CD4-positive, alpha-beta T cell (primary cell): ENCODE measurements at regions of chr19 and their contacts with region 1.

Region 1: DNA sequence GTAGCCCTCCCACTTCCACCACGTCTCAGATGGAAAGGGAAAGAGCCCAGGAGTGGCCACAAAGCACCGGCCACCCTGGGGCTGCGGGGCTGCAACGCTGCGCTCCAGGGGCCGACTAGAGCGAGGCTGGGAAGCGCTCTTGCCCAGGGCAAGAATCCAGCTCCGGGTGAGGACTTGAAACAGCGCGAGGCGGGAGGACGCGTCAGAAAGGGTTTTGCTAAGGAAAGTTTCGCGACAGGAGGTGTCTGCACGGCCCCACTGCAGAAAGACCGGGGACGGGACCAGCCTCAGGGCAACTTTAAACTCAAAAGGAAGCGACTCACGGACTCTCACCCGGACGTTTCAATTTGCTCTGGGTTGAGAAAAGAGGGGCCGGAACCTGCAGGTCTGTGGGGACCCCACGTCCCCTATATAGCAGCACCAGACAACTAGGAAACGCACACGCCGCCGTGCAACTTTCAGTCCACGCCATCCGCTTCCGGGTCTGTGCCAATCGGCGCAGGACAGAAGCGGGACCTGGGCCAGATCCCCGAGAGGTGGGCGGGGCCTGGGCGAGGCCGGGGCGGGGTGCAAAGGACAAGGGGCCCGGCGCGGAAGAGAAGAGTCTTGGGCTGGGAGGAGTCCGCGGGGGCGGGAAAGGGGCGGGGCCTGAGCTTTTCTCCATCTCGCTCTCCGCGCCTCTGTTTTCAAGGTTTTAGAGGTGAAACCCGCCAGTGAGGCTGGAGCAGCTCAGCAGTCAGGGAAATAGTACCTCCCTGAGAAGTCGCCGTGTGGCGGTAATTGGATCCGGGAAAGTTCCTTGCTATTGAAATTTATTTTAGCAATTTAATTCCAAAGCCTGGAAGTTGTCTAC is at the start of gene ZNF816:
- DNase-seq: peak; percentile 97 to 100 (median 99)
- ATAC-seq: peak; percentile 99
- H3K4me3 ChIP-seq: peak within 1 kb of the TSS; percentile 78
- H3K4me3 Mint-ChIP-seq: peak within 1 kb of the TSS; percentile 97
- H3K27ac ChIP-seq: peak within 1 kb of the TSS; percentile 63 to 68
- H3K27ac Mint-ChIP-seq: peak within 1 kb of the TSS; percentile 97
- H3K4me1 ChIP-seq: peaks cover 20% of the 10 kb centered on the region
- H3K4me1 Mint-ChIP-seq: peaks cover 36% of the 10 kb centered on the region
- H3K27me3 ChIP-seq: no peaks in the 10 kb centered on the region
- H3K27me3 Mint-ChIP-seq: no peaks in the 10 kb centered on the region
- CTCF ChIP-seq: no peak
- total RNA-seq, gene ZNF816: 3.6 to 5.5 TPM

Region 2: DNA sequence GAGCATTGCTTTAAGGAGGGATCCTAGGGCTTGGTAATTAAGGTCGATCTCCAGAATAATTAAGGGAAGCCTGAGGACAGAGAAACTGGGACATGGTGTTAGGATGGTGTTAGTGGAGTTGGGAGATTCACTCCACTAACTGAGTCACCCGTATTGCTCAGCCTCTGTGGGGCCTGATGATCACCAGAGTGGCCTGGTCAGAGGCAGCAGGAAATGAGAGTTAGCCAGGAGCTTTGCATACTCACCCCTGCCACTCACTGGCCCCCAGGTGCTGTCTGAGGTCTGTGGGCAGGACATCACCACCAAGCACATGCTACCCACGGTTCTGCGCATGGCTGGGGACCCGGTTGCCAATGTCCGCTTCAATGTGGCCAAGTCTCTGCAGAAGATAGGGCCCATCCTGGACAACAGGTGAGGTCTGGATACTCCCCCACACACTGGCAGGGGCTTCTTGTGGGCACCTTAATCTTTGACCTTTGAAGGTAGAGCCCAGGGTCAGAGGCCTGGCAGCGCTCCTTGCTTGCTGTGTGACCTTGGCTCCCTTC is 740.7 kb before region 1 on chr19:
- CTCF ChIA-PET with region 1: no interaction called
- POLR2A ChIA-PET with region 1: no interaction called
- intact Hi-C with region 1: no loop called
- DNase-seq: no peak
- ATAC-seq: no peak
- H3K4me3 ChIP-seq: no peak overlapping the region
- H3K4me3 Mint-ChIP-seq: no peak overlapping the region
- H3K27ac ChIP-seq: no peak overlapping the region
- H3K27ac Mint-ChIP-seq: no peak overlapping the region
- H3K4me1 ChIP-seq: no peaks in the 10 kb centered on the region
- H3K4me1 Mint-ChIP-seq: no peaks in the 10 kb centered on the region
- H3K27me3 ChIP-seq: no peaks in the 10 kb centered on the region
- H3K27me3 Mint-ChIP-seq: no peaks in the 10 kb centered on the region
- CTCF ChIP-seq: no peak

Region 3: GRCh38 chr19:52734893-52735661 is 227.5 kb before region 1 on chr19 and contains the start of gene ZNF611:
- CTCF ChIA-PET with region 1: no interaction called
- POLR2A ChIA-PET with region 1: no interaction called
- intact Hi-C with region 1: loop called in 1 of 2 experiments (anchors 1 kb)
- DNase-seq: peak; percentile 98 to 100 (median 99)
- ATAC-seq: peak; percentile 97
- H3K4me3 ChIP-seq: peak within 1 kb of the TSS; percentile 98
- H3K4me3 Mint-ChIP-seq: peak within 1 kb of the TSS; percentile 95
- H3K27ac ChIP-seq: peak within 1 kb of the TSS; percentile 74 to 93
- H3K27ac Mint-ChIP-seq: peak within 1 kb of the TSS; percentile 96
- H3K4me1 ChIP-seq: peaks cover 23% of the 10 kb centered on the region
- H3K4me1 Mint-ChIP-seq: peaks cover 28% of the 10 kb centered on the region
- H3K27me3 ChIP-seq: no peaks in the 10 kb centered on the region
- H3K27me3 Mint-ChIP-seq: no peaks in the 10 kb centered on the region
- CTCF ChIP-seq: peak; percentile 70
- total RNA-seq, gene ZNF611: 14.6 to 15.5 TPM

Region 4: GRCh38 chr19:52922841-52923777 is 39.5 kb before region 1 on chr19 and contains the start of gene ZNF888:
- CTCF ChIA-PET with region 1: no interaction called
- POLR2A ChIA-PET with region 1: interaction called, 4 read pairs
- intact Hi-C with region 1: loop called (anchors 1 to 2 kb)
- DNase-seq: peak; percentile 71 to 92 (median 78)
- ATAC-seq: peak; percentile 99
- H3K4me3 ChIP-seq: peak within 1 kb of the TSS; percentile 68
- H3K4me3 Mint-ChIP-seq: peak within 1 kb of the TSS; percentile 96
- H3K27ac ChIP-seq: peak within 1 kb of the TSS in 1 of 2 donors; percentile 38
- H3K27ac Mint-ChIP-seq: peak within 1 kb of the TSS; percentile 89
- H3K4me1 ChIP-seq: peaks cover 22% of the 10 kb centered on the region
- H3K4me1 Mint-ChIP-seq: peaks cover 34% of the 10 kb centered on the region
- H3K27me3 ChIP-seq: peaks cover 0 to 2% of the 10 kb centered on the region in 2 experiments
- H3K27me3 Mint-ChIP-seq: no peaks in the 10 kb centered on the region
- CTCF ChIP-seq: no peak
- total RNA-seq, gene ZNF888: 2.5 to 3.0 TPM

Region 5: GRCh38 chr19:52993323-52994178 is 30.9 kb after region 1 on chr19:
- CTCF ChIA-PET with region 1: interaction called, 3 read pairs
- POLR2A ChIA-PET with region 1: no interaction called
- intact Hi-C with region 1: loop called in 1 of 2 experiments (anchors 2 kb)
- DNase-seq: peak; percentile 66 to 84 (median 74)
- ATAC-seq: peak; percentile 81
- H3K4me3 ChIP-seq: peak overlapping the region; percentile 52
- H3K4me3 Mint-ChIP-seq: peak overlapping the region; percentile 93
- H3K27ac ChIP-seq: no peak overlapping the region
- H3K27ac Mint-ChIP-seq: no peak overlapping the region
- H3K4me1 ChIP-seq: peaks cover 18% of the 10 kb centered on the region
- H3K4me1 Mint-ChIP-seq: peaks cover 20% of the 10 kb centered on the region
- H3K27me3 ChIP-seq: peaks cover 0 to 5% of the 10 kb centered on the region in 2 experiments
- H3K27me3 Mint-ChIP-seq: peaks cover 7% of the 10 kb centered on the region
- CTCF ChIP-seq: peak; percentile 67

Region 6: GRCh38 chr19:53520550-53521372 is 558.1 kb after region 1 on chr19:
- CTCF ChIA-PET with region 1: no interaction called
- POLR2A ChIA-PET with region 1: no interaction called
- intact Hi-C with region 1: loop called in 1 of 2 experiments (anchors 5 kb)
- DNase-seq: peak; percentile 79 to 96 (median 84)
- ATAC-seq: peak; percentile 99
- H3K4me3 ChIP-seq: peak overlapping the region; percentile 91
- H3K4me3 Mint-ChIP-seq: peak overlapping the region; percentile 92
- H3K27ac ChIP-seq: peak overlapping the region; percentile 66 to 77
- H3K27ac Mint-ChIP-seq: peak overlapping the region; percentile 92
- H3K4me1 ChIP-seq: peaks cover 18% of the 10 kb centered on the region
- H3K4me1 Mint-ChIP-seq: peaks cover 20% of the 10 kb centered on the region
- H3K27me3 ChIP-seq: no peaks in the 10 kb centered on the region
- H3K27me3 Mint-ChIP-seq: no peaks in the 10 kb centered on the region
- CTCF ChIP-seq: no peak